PC-9 (cell line): ENCODE measurements at regions of chr12 and their contacts with region 1.

Region 1: GRCh38 chr12:70178038-70178437 is 65.2 kb upstream of the CNOT2 start:
- DNase-seq: no peak
- H3K4me3 ChIP-seq: no peak overlapping the region
- H3K27ac ChIP-seq: no peak overlapping the region
- H3K4me1 ChIP-seq: no peaks in the 10 kb centered on the region; the same call in 1 of the 2 replicates
- H3K27me3 ChIP-seq: no peaks in the 10 kb centered on the region
- CTCF ChIP-seq: no peak

Region 2: GRCh38 chr12:70255311-70255710 is 77.3 kb after region 1 on chr12:
- CTCF ChIA-PET with region 1: no interaction called
- POLR2A ChIA-PET with region 1: no interaction called
- intact Hi-C with region 1: no loop called
- DNase-seq: no peak
- H3K4me3 ChIP-seq: no peak overlapping the region
- H3K27ac ChIP-seq: no peak overlapping the region
- H3K4me1 ChIP-seq: peaks cover 8% of the 10 kb centered on the region; the same call in 1 of the 2 replicates
- H3K27me3 ChIP-seq: no peaks in the 10 kb centered on the region
- CTCF ChIP-seq: no peak

Region 3: GRCh38 chr12:71385155-71385554 is 1207.1 kb after region 1 on chr12:
- CTCF ChIA-PET with region 1: no interaction called
- POLR2A ChIA-PET with region 1: interaction called, 20 read pairs
- intact Hi-C with region 1: no loop called
- DNase-seq: no peak
- H3K4me3 ChIP-seq: no peak overlapping the region
- H3K27ac ChIP-seq: no peak overlapping the region
- H3K4me1 ChIP-seq: no peaks in the 10 kb centered on the region
- H3K27me3 ChIP-seq: no peaks in the 10 kb centered on the region
- CTCF ChIP-seq: no peak